Posterior vena cava (tissue), 2 donors: ENCODE measurements at regions of chr1 and their contacts with region 1.

Region 1: GRCh38 chr1:14538335-14538734 is 60.1 kb upstream of the KAZN start:
- DNase-seq: no peak

Region 2: GRCh38 chr1:13583966-13584791 is 954.2 kb before region 1 on chr1:
- intact Hi-C with region 1: loop called in 1 of 2 experiments (anchors 5 kb)
- DNase-seq: peak; percentile 85

Region 3: GRCh38 chr1:14421977-14422609 is 116.2 kb before region 1 on chr1:
- intact Hi-C with region 1: no loop called
- DNase-seq: no peak

Region 4: DNA sequence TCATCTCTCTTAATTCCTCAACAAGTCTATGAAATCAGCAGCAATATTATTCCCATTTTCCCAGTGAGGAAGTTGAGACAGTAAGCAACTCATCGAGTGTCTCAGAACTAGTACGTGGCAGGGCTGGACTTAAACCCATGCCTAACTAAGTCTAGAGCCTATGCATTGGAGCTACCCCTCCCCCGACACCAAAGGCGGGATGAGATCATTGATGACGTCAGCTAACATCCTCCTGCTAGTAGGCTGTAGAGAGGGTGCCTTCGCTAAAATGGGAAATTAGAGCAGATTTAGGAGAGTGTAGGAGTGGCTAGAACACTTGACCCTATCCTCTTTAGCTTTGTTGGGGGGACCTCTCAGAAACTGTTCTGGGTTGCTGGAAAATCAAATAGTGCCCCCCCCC is 52.4 kb after region 1 on chr1:
- intact Hi-C with region 1: no loop called
- DNase-seq: no peak